Naive thymus-derived CD4-positive, alpha-beta T cell (primary cell): ENCODE measurements at regions of chr11 and their contacts with region 1.

Region 1: DNA sequence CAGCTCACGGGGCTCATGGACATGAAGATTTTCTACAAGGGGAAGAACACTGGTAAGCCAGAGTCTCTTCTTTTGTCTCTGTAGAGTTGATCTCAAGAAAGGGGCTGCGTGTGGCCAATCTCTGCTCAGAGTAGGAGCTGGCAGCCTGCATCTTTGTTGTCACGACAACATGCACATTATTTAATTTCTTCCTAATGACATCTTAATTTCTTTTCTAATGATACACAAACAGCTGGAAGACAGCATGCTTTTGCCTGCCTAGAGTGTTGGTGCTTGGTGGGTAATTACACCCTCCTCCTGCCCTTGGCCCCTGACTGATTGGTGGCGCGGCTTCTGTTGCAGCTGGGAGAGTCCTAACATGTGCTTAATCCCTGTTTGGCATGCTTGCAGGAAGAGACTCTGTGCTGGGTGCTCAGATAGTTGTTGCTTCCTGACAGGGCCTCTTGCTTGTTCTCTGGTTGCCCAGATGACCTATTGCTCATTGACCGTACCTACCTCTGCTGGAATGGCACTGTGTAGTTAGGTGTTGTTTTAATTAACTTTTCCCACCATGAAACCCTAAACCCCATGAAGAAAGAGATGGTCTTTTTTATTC is 106.9 kb upstream of the SORL1-AS1 start:
- DNase-seq: no peak
- ATAC-seq: no peak
- H3K4me3 ChIP-seq: no peak overlapping the region
- H3K4me3 Mint-ChIP-seq: no peak overlapping the region
- H3K27ac ChIP-seq: no peak overlapping the region
- H3K27ac Mint-ChIP-seq: peak overlapping the region; percentile 10 to 78 (median 55)
- H3K4me1 ChIP-seq: no peaks in the 10 kb centered on the region
- H3K4me1 Mint-ChIP-seq: peaks cover 13 to 56% (median 45%) of the 10 kb centered on the region in 7 donors
- H3K27me3 ChIP-seq: no peaks in the 10 kb centered on the region
- H3K27me3 Mint-ChIP-seq: no peaks in the 10 kb centered on the region

Region 2: DNA sequence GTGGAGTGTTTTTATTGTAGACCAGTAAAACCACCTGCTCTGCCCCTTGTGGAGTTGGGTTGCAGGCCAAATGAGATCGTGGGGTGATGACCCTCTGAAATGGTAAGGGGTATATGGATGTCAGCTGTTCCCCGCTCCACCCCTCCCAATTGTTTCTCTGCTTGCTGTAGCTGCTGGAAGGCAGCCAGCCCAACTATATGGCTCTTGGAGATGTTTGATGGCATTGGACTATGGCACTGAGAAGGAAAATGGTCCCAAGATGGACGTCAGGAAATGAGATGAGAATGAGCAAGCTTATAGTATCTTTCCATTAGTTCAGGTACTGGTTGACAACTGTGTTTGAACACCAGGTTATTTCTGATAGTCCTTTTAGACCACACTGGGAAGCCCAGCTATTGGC is 12.1 kb before region 1 on chr11:
- CTCF ChIA-PET with region 1: no interaction called
- POLR2A ChIA-PET with region 1: interaction called, 3 read pairs
- intact Hi-C with region 1: loop called in 1 of 2 experiments (anchors 2 kb)
- DNase-seq: no peak
- ATAC-seq: no peak
- H3K4me3 ChIP-seq: no peak overlapping the region
- H3K4me3 Mint-ChIP-seq: peak overlapping the region in 2 of 10 donors; percentile 17 to 51
- H3K27ac ChIP-seq: no peak overlapping the region
- H3K27ac Mint-ChIP-seq: peak overlapping the region in 4 of 9 donors; percentile 11 to 80 (median 32)
- H3K4me1 ChIP-seq: peaks cover 10 to 18% of the 10 kb centered on the region in 2 donors
- H3K4me1 Mint-ChIP-seq: peaks cover 29 to 54% (median 49%) of the 10 kb centered on the region in 7 donors
- H3K27me3 ChIP-seq: no peaks in the 10 kb centered on the region
- H3K27me3 Mint-ChIP-seq: no peaks in the 10 kb centered on the region

Region 3: DNA sequence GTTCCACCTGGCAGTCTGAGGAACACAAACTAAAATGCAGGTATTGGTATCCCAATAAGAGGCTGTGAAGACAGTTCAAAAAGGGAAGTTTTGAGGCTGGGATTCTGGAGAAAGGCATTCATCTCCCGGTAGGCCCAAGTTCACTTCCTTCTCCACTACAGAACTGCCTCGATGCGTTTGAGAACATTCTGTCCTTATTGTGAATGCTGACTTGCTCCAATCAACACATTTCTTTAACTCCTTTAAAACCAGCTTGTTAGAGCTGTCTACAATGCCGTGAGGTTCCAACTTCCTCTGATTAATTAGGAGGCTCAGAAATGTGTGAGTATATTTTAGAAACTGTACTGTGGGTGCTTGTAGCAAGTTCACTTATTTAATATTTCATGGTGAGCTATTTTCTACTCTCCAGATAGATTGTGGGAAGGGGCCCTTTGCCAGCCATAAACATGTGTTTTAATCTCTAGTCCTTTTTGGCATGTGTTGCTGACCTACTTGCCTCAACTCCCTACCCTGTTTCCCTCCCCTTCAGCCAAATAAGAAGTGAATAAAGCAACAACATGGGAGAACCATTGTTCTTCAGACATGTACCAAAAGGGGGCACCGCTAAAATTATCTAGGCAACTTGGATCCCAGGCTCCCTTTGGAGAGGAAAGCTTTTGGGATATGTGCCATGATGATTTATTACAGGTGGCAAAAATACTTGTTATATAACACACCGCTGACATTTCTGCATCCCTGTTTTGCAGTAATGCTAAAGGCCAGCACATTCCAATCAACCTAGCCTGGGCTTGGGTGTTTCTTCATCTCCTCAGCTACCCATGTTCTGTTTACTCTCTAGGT is 310.7 kb after region 1 on chr11:
- CTCF ChIA-PET with region 1: no interaction called
- POLR2A ChIA-PET with region 1: no interaction called
- intact Hi-C with region 1: no loop called
- DNase-seq: no peak
- ATAC-seq: no peak
- H3K4me3 ChIP-seq: no peak overlapping the region
- H3K4me3 Mint-ChIP-seq: no peak overlapping the region
- H3K27ac ChIP-seq: no peak overlapping the region
- H3K27ac Mint-ChIP-seq: no peak overlapping the region
- H3K4me1 ChIP-seq: no peaks in the 10 kb centered on the region
- H3K4me1 Mint-ChIP-seq: no peaks in the 10 kb centered on the region
- H3K27me3 ChIP-seq: no peaks in the 10 kb centered on the region
- H3K27me3 Mint-ChIP-seq: peaks cover 0 to 5% (median 0%) of the 10 kb centered on the region in 5 donors